ENCODE measurements at regions of chr11 and their contacts with region 1.

Region 1: DNA sequence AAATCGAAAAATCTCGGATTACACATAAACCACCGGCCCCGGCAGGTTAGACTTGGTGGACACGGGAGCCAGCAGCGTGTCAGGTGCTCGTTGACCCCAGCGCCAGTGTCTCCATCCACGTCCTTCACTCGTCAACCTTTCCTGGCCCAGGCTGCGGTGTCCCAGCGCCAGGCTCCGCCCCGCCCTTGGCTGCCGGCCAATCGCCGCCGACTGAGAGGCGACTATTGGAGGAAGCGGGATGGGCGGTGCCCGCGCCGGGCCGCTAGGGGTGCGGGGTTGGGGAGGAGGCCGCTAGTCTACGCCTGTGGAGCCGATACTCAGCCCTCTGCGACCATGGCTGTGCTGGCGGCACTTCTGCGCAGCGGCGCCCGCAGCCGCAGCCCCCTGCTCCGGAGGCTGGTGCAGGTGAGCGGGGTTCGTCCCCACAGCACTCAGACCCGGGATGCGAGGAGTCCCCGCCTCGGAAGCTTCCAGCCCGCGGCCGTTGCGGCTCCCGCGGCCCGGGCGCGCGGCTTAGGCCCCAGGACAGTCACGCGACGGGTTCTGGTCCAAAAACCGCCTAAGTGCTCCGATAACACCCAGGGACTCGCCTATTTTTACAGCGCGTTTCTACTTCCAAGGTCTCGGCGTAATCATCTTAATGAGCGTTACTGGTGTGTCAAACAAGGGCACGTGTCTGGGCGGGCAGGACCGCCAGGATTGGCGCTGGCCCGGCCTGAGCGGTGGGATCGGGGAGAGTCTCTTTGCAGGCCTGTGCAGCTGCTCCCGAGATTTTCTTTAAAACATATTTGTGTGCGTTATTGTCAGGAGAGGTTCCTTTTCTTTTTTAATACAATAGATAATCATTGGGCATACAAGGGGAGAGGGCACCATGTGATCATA is at the start of gene ACAT1:
- DNase-seq: peak; percentile 98
- H3K4me3 Mint-ChIP-seq: peak within 1 kb of the TSS; percentile 87
- H3K27ac Mint-ChIP-seq: peak within 1 kb of the TSS; percentile 67
- H3K4me1 Mint-ChIP-seq: peaks cover 38% of the 10 kb centered on the region
- H3K27me3 Mint-ChIP-seq: no peaks in the 10 kb centered on the region
- total RNA-seq, gene ACAT1: 58.3 to 64.9 TPM

Region 2: DNA sequence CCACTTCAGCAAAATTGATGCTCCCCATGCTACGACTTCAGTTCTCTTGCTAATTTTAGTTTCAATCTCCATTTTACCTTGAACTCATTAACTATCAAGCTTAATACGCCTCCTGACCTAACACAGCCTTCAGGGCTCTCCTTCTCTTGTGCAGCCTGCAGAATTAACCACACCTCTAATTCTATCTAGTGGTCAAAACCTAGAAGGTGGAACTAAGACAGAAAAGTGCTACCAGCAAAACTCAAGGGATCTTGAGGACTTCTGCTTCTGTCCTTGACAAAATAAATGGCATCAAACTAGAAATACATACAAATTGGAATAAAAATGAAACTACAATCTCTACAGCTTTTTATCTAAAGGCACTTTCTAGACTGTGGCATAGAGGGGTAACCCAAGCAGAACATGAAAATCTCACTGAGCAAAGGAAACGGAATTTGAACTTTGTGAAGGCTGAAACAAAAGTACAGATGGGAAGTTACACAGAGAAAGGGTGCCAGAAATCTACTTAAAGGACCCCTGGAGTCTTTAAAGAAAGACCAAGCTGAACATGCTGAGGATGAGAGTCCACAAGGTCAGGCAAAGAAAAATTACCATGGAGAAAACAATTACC is 674.6 kb before region 1 on chr11:
- CTCF ChIA-PET with region 1: no interaction called
- POLR2A ChIA-PET with region 1: no interaction called
- intact Hi-C with region 1: no loop called
- DNase-seq: no peak
- H3K4me3 Mint-ChIP-seq: no peak overlapping the region
- H3K27ac Mint-ChIP-seq: no peak overlapping the region
- H3K4me1 Mint-ChIP-seq: peaks cover 25% of the 10 kb centered on the region
- H3K27me3 Mint-ChIP-seq: no peaks in the 10 kb centered on the region

Region 3: GRCh38 chr11:108302121-108302785 is 180.7 kb after region 1 on chr11:
- CTCF ChIA-PET with region 1: no interaction called
- POLR2A ChIA-PET with region 1: no interaction called
- intact Hi-C with region 1: loop called (anchors 5 kb)
- DNase-seq: no peak
- H3K4me3 Mint-ChIP-seq: no peak overlapping the region
- H3K27ac Mint-ChIP-seq: no peak overlapping the region
- H3K4me1 Mint-ChIP-seq: peaks cover 20% of the 10 kb centered on the region
- H3K27me3 Mint-ChIP-seq: no peaks in the 10 kb centered on the region

Region 4: GRCh38 chr11:108388576-108388975 is 267.1 kb after region 1 on chr11:
- CTCF ChIA-PET with region 1: no interaction called
- POLR2A ChIA-PET with region 1: no interaction called
- intact Hi-C with region 1: no loop called
- DNase-seq: no peak
- H3K4me3 Mint-ChIP-seq: no peak overlapping the region
- H3K27ac Mint-ChIP-seq: no peak overlapping the region
- H3K4me1 Mint-ChIP-seq: no peaks in the 10 kb centered on the region
- H3K27me3 Mint-ChIP-seq: no peaks in the 10 kb centered on the region

Region 5: DNA sequence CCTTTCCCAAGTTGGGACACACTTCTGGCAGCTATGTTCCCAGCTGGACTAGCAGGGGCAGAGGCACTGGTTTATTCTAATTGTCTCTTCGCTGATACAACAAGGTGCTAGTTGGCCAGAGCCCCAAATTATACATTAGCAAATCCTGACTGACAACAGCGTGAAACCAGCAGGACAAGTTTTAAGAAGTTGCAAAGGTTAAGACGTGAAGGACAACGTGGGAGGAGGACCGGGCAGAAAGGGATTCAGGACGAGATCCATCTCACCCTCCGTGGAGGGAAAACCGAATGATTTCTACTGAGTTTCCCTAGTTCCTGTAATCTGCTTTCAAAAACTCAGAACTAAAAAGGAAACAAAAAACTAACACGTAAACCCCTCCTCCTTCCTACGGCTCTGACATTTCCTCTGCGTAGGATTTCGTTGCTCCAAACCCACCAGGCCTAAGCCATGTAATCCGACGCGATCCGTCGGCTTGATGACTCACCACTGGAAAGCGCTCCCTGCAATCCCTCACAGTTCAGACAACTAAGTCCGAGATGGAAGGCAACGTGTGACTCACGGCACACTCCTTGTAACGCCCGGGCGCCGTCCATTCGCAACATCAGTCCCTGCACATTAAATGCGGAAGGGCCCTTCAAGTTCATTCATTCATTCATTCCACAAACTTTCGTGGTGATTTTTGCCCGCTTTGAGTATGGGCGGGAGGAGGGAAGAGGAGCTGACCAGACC is 376.0 kb after region 1 on chr11:
- CTCF ChIA-PET with region 1: no interaction called
- POLR2A ChIA-PET with region 1: no interaction called
- intact Hi-C with region 1: loop called (anchors 5 kb)
- DNase-seq: peak; percentile 87
- H3K4me3 Mint-ChIP-seq: peak overlapping the region; percentile 95
- H3K27ac Mint-ChIP-seq: peak overlapping the region; percentile 99
- H3K4me1 Mint-ChIP-seq: peaks cover 16% of the 10 kb centered on the region
- H3K27me3 Mint-ChIP-seq: no peaks in the 10 kb centered on the region

Region 6: DNA sequence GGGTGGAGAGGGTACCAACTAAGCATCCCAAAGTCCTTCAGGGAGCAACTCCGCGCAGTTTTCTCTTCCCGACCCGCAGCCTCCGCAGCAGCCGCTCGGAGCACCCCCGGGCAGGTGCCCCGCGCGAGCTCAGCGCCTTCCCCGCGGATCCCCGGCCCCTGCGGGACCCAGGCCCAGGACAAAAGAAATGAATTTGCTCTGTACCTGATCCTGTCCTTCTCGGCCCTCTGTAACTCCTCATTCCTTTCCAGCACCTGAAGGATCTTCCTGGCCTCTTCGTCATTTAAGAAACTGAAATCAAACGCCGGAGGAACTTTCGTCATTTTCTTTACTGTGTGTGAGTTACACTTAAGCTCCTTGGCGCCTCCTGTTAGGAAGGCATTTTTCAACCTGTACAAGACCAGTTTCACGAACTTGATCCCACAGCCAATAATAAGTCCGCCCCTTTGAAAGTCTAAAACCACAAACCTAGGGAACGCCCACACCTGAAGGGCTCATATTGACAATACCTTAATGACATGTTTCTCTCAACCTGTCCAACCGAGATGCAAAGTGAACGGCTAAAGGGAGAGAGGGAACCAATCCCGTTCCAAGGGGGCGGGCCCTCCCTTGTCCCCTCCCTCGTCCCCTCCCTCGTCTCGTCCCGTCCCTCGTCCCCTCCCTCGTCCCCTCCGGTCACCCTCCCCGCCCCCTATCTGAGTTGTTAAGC is 471.9 kb after region 1 on chr11 and contains the start of gene EXPH5:
- CTCF ChIA-PET with region 1: no interaction called
- POLR2A ChIA-PET with region 1: no interaction called
- intact Hi-C with region 1: loop called (anchors 1 kb)
- DNase-seq: peak; percentile 93
- H3K4me3 Mint-ChIP-seq: peak within 1 kb of the TSS; percentile 87
- H3K27ac Mint-ChIP-seq: peak within 1 kb of the TSS; percentile 68
- H3K4me1 Mint-ChIP-seq: peaks cover 17% of the 10 kb centered on the region
- H3K27me3 Mint-ChIP-seq: peaks cover 11% of the 10 kb centered on the region
- total RNA-seq, gene EXPH5: 1.4 to 1.8 TPM

Region 7: DNA sequence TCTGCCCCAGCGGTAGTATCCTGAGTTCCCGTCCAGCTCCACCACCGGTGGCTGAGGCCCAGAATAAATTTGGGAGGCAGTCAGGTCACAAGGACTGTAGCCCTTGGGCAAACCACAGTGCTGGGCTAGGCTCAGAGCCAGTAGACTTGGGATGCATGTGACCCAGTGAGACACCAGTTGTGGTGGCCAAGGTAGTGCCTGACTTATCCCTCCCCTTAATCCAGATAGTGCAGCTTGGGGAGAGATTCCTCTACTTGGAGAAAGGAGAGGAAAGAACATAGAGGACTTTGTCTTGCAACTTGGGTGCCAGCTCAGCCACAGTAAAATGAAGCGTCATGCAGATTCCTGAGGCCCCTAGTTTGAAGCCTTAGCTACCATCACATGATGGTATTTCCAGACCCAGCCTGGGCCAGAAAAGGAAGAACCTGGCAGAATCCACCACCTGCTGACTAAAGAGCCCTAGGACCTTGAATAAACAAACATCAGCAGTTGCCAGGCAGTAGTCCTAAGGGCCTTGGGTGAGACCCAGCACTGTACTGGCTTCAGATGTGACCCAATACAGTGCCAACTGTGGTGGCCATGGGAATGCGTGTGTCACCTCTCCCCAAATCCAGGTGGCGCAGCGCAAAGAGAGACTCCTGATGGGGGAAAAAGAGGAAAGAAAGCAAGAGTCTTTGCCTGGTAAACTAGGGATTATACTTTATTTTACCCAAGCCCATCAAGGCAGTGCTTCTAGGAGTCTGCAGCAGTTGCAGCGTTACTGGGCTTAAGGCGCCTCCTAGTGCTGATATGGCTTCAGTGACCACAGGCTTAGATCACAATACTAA is 526.4 kb after region 1 on chr11:
- CTCF ChIA-PET with region 1: interaction called, 36 read pairs
- POLR2A ChIA-PET with region 1: no interaction called
- intact Hi-C with region 1: loop called (anchors 1 kb)
- DNase-seq: peak; percentile 76
- H3K4me3 Mint-ChIP-seq: no peak overlapping the region
- H3K27ac Mint-ChIP-seq: no peak overlapping the region
- H3K4me1 Mint-ChIP-seq: no peaks in the 10 kb centered on the region
- H3K27me3 Mint-ChIP-seq: no peaks in the 10 kb centered on the region

Region 8: DNA sequence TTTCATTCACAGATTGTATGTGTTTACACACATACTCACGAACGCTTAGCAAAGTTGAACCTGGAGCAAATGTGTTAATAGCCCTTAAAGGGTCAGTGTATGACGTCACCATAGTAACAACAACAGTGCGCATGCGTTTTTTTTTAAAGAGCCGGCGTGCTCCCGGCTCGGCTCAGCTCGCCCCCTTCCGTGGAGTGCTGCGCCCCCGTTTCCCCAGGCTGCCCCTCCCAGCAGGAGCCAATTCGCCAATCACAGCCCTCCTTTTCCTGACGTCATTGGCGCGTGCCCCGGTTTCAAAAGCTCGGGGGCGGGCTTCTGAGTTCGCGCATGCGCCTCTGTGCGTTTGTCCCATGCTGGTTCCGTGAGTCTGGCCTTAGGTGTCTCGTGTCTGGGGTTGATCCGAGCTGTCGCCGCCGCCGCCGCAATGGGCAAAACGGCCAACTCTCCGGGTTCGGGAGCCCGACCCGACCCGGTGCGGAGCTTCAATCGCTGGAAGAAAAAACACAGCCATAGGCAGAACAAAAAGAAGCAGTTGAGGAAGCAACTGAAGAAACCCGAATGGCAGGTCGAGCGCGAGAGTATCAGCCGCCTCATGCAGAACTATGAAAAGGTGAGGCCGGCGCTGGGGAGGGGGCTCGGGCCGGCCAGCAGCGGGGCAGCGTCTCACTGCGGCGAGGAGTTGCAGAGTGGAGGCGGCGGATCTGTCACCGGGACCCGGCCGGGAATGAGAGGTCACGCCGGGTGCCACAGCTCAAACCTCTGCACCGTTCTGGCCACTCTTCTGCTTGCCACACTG is 543.4 kb after region 1 on chr11 and contains the start of gene DDX10:
- CTCF ChIA-PET with region 1: interaction called, 5 read pairs
- POLR2A ChIA-PET with region 1: no interaction called
- intact Hi-C with region 1: loop called (anchors 1 kb)
- DNase-seq: peak; percentile 99
- H3K4me3 Mint-ChIP-seq: peak within 1 kb of the TSS; percentile 100
- H3K27ac Mint-ChIP-seq: peak within 1 kb of the TSS; percentile 80
- H3K4me1 Mint-ChIP-seq: peaks cover 44% of the 10 kb centered on the region
- H3K27me3 Mint-ChIP-seq: no peaks in the 10 kb centered on the region
- total RNA-seq, gene DDX10: 34.8 to 37.7 TPM